A673 (cell line): ENCODE measurements at regions of chrX and their contacts with region 1.

Region 1: GRCh38 chrX:85611926-85612325 is 232.5 kb upstream of the POF1B start:
- DNase-seq: peak; percentile 32
- H3K4me3 ChIP-seq: no peak overlapping the region
- H3K27ac ChIP-seq: no peak overlapping the region
- H3K4me1 ChIP-seq: no peaks in the 10 kb centered on the region
- H3K27me3 ChIP-seq: no peaks in the 10 kb centered on the region
- CTCF ChIP-seq: peak; percentile 51

Region 2: DNA sequence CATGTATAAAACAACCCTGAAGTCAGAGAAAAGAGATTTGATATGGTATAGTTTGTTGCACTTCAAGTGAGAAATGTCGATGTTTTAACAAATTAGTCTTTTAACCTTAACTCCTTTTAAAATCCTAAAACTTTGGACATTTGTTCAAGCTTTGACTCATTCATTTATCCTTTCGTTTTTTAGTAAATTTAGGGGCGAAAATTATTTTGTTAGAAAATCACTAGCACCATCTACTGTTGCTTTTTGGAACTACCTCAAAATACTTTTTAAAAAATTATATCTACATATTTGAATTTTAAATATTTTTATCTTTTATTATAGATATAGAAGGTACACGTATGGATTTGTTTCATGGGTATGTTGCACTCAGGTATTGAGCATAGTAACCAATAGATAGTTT is 67.3 kb before region 1 on chrX:
- CTCF ChIA-PET with region 1: no interaction called
- POLR2A ChIA-PET with region 1: no interaction called
- intact Hi-C with region 1: no loop called
- DNase-seq: peak; percentile 3
- H3K4me3 ChIP-seq: no peak overlapping the region
- H3K27ac ChIP-seq: no peak overlapping the region
- H3K4me1 ChIP-seq: no peaks in the 10 kb centered on the region
- H3K27me3 ChIP-seq: no peaks in the 10 kb centered on the region
- CTCF ChIP-seq: peak; percentile 59; the same call in 1 of the 2 replicates

Region 3: DNA sequence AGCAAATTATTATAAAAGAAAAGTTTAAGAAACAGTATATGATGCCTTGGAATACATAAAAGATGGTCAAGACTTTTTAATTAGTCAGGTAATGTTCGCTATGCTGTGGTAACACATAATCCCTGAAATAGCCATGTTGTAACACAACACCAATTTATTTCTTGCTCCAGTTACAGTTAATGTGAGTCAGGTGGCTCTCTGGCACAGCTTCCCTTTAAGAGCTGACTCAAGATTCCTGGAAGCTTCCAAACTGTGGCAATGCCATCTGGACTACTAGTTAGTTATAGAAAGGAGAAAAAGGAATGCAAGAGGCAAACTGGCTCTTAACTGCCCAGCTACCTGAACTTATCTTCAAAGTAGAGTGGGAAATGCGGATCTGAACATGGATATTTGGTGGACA is 224.9 kb after region 1 on chrX:
- CTCF ChIA-PET with region 1: no interaction called
- POLR2A ChIA-PET with region 1: no interaction called
- intact Hi-C with region 1: loop called (anchors 10 kb)
- DNase-seq: no peak
- H3K4me3 ChIP-seq: no peak overlapping the region
- H3K27ac ChIP-seq: no peak overlapping the region
- H3K4me1 ChIP-seq: no peaks in the 10 kb centered on the region
- H3K27me3 ChIP-seq: no peaks in the 10 kb centered on the region
- CTCF ChIP-seq: no peak

Region 4: GRCh38 chrX:86946569-86946968 is 1334.6 kb after region 1 on chrX:
- CTCF ChIA-PET with region 1: no interaction called
- POLR2A ChIA-PET with region 1: no interaction called
- intact Hi-C with region 1: loop called (anchors 5 kb)
- DNase-seq: peak; percentile 28
- H3K4me3 ChIP-seq: no peak overlapping the region
- H3K27ac ChIP-seq: no peak overlapping the region
- H3K4me1 ChIP-seq: no peaks in the 10 kb centered on the region
- H3K27me3 ChIP-seq: no peaks in the 10 kb centered on the region
- CTCF ChIP-seq: peak; percentile 71

Region 5: GRCh38 chrX:87299563-87300160 is 1687.7 kb after region 1 on chrX:
- CTCF ChIA-PET with region 1: no interaction called
- POLR2A ChIA-PET with region 1: no interaction called
- intact Hi-C with region 1: loop called (anchors 5 kb)
- DNase-seq: peak; percentile 24
- H3K4me3 ChIP-seq: no peak overlapping the region
- H3K27ac ChIP-seq: no peak overlapping the region
- H3K4me1 ChIP-seq: no peaks in the 10 kb centered on the region
- H3K27me3 ChIP-seq: no peaks in the 10 kb centered on the region
- CTCF ChIP-seq: peak; percentile 67